CD4-positive, alpha-beta memory T cell (primary cell): ENCODE measurements at regions of chr1 and their contacts with region 1.

Region 1: DNA sequence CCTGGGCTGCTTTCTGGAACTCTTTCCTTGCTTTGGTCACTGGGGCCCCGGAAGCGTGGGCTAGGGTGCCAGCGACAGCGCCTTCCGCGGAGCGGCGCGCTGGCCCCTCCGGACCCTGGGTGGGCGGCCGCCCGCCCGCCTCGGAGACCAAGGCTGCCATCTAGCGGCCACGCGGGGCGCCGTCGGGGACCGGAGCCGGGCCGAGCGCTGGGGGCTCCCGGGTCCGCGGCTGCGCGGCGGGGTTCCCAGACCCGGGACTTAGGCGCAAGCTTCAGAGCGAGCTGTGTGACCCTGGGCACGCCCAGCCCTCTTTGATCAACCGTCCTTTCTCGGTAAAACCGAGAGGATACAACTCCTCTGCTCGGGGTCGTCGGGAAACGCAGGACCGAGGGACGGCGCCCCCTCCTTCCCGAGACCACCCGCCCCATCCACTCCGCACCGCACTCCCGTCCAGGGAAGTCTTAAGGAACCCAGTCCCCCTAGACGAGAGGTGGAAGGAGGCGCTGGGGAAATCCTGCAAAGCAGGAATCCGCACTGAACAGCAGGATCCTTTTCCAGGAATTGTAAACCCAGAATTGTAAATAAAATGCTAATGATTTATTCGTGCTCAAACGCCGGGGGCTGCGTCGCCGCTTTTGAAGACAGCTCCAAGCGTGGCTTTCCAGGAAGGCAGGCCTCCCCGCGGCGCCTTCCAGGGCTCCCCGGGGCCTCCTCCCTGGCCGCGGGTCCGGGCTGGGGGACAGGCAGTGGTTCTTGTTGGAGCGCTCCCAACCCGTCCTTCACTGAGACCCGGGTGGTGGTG is 41.2 kb downstream of the RRAGC start:
- DNase-seq: peak in 4 of 5 donors; percentile 13 to 34 (median 18)
- H3K4me3 ChIP-seq: no peak overlapping the region
- H3K4me3 Mint-ChIP-seq: peak overlapping the region in 3 of 8 donors; percentile 13 to 59 (median 53)
- H3K27ac ChIP-seq: no peak overlapping the region
- H3K27ac Mint-ChIP-seq: no peak overlapping the region
- H3K4me1 ChIP-seq: peaks cover 19% of the 10 kb centered on the region
- H3K4me1 Mint-ChIP-seq: peaks cover 3 to 23% (median 6%) of the 10 kb centered on the region in 4 donors
- H3K27me3 ChIP-seq: peaks cover 41% of the 10 kb centered on the region
- H3K27me3 Mint-ChIP-seq: peaks cover 49 to 63% of the 10 kb centered on the region in 2 donors

Region 2: GRCh38 chr1:38489844-38490270 is 328.5 kb before region 1 on chr1:
- CTCF ChIA-PET with region 1: no interaction called
- POLR2A ChIA-PET with region 1: no interaction called
- intact Hi-C with region 1: loop called (anchors 10 kb)
- DNase-seq: peak in 4 of 5 donors; percentile 3 to 22 (median 15)
- H3K4me3 ChIP-seq: no peak overlapping the region
- H3K4me3 Mint-ChIP-seq: no peak overlapping the region
- H3K27ac ChIP-seq: no peak overlapping the region
- H3K27ac Mint-ChIP-seq: no peak overlapping the region
- H3K4me1 ChIP-seq: no peaks in the 10 kb centered on the region
- H3K4me1 Mint-ChIP-seq: no peaks in the 10 kb centered on the region
- H3K27me3 ChIP-seq: no peaks in the 10 kb centered on the region
- H3K27me3 Mint-ChIP-seq: peaks cover 7 to 27% of the 10 kb centered on the region in 2 donors

Region 3: DNA sequence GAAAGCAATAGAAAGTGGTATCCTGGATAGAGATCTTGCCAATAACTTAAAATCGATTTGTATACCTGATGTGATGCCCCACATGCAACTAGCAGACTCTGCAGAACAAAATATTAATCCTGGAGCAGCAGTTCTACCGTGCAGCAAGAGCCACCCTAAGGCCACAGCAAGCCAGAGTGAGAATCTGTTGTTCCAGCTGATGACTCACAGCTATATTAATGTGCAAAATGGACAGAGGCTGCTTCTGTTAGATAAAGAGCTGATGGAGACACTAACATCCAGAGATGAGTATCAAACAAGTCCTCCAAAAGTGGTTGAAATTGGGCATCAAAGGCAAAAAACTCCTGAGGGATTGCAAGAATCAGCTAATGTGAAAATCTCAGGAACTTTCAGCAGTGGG is 513.9 kb after region 1 on chr1:
- CTCF ChIA-PET with region 1: no interaction called
- POLR2A ChIA-PET with region 1: no interaction called
- intact Hi-C with region 1: no loop called
- DNase-seq: no peak
- H3K4me3 ChIP-seq: no peak overlapping the region
- H3K4me3 Mint-ChIP-seq: no peak overlapping the region
- H3K27ac ChIP-seq: no peak overlapping the region
- H3K27ac Mint-ChIP-seq: peak overlapping the region in 4 of 7 donors; percentile 36 to 57 (median 46)
- H3K4me1 ChIP-seq: peaks cover 16% of the 10 kb centered on the region
- H3K4me1 Mint-ChIP-seq: peaks cover 18 to 50% (median 30%) of the 10 kb centered on the region in 4 donors
- H3K27me3 ChIP-seq: no peaks in the 10 kb centered on the region
- H3K27me3 Mint-ChIP-seq: no peaks in the 10 kb centered on the region